ENCODE measurements at regions of chr2 and their contacts with region 1.

Region 1: GRCh38 chr2:20291106-20291564 is 59.5 kb downstream of the PUM2 start:
- DNase-seq: peak; percentile 75
- ATAC-seq: peak; percentile 91
- H3K4me3 ChIP-seq: no peak overlapping the region
- H3K27ac ChIP-seq: peak overlapping the region; percentile 48; the same call in 1 of the 2 replicates
- H3K4me1 ChIP-seq: peaks cover 26 to 43% of the 10 kb centered on the region in 2 experiments
- H3K27me3 ChIP-seq: no peaks in the 10 kb centered on the region
- CTCF ChIP-seq: peak; percentile 75 to 98 (median 90)
- POLR2A ChIP-seq: no peak
- RAD21 ChIP-seq: peak; percentile 74

Region 2: GRCh38 chr2:19982268-19982667 is 308.9 kb before region 1 on chr2:
- CTCF ChIA-PET with region 1: no interaction called
- POLR2A ChIA-PET with region 1: no interaction called
- RAD21 ChIA-PET with region 1: no interaction called
- intact Hi-C with region 1: no loop called
- DNase-seq: no peak
- ATAC-seq: no peak
- H3K4me3 ChIP-seq: no peak overlapping the region
- H3K27ac ChIP-seq: no peak overlapping the region
- H3K4me1 ChIP-seq: 0 out of 4 replicates have a peak, but pooled peaks cover 0 to 2% of the 10 kb centered on the region in 2 experiments
- H3K27me3 ChIP-seq: no peaks in the 10 kb centered on the region
- CTCF ChIP-seq: no peak
- POLR2A ChIP-seq: no peak
- RAD21 ChIP-seq: no peak

Region 3: DNA sequence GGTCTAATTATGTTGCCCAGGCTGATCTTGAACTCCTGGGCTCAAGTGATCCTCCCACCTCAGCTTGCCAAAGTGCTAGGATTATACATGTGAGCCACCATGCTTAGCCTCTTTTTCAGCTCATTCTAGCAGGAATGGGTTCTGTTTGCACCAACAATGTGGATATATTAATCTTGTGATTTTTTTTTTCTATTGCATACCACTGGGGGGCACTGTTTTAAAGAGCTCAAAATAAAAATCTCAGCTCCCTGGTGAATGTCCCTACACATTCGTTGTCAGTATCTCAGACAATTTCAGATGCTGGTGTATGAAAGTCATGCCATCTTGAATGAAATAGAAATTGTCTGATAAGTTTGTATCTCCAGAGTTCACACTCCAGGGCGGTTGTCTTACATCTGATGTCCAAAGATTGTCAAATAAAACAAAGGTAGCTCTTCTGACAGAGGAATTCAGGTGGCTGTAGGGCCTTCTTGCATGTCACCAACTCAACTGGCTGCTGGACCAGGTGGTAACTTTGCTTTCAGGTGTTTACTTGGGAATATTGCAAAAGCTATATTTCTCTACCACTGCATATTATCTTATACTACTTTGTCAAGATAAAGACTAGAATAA is 275.6 kb before region 1 on chr2:
- CTCF ChIA-PET with region 1: interaction called, 10 read pairs
- POLR2A ChIA-PET with region 1: no interaction called
- RAD21 ChIA-PET with region 1: no interaction called
- intact Hi-C with region 1: no loop called
- DNase-seq: peak; percentile 26
- ATAC-seq: peak; percentile 74
- H3K4me3 ChIP-seq: no peak overlapping the region
- H3K27ac ChIP-seq: no peak overlapping the region
- H3K4me1 ChIP-seq: no peaks in the 10 kb centered on the region
- H3K27me3 ChIP-seq: no peaks in the 10 kb centered on the region
- CTCF ChIP-seq: peak; percentile 52 to 83 (median 70)
- POLR2A ChIP-seq: no peak
- RAD21 ChIP-seq: peak; percentile 77

Region 4: DNA sequence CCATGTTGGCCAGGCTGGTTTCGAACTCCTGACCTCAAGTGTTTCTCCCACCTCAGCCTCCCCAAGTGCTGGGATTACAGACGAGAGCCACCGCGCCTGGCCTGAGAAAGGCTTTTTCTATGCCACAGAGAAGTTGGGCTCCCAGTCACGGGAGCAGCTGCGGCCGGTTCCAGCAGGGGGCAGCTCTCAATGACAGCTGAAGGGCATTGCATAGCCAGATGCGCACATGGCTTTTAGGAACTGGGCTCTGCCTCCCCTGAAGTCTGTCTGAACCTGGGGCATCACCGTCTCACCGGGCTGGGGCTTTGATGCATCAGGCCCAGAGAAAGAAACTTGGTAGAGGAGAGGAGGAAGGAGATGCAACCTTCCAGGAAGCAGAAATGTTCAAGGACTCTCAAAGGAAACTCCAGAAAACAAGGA is 155.5 kb before region 1 on chr2:
- CTCF ChIA-PET with region 1: interaction called, 10 read pairs
- POLR2A ChIA-PET with region 1: no interaction called
- RAD21 ChIA-PET with region 1: interaction called in 1 of 2 experiments, 3 read pairs
- intact Hi-C with region 1: loop called (anchors 1 kb)
- DNase-seq: peak; percentile 43
- ATAC-seq: peak; percentile 93
- H3K4me3 ChIP-seq: no peak overlapping the region
- H3K27ac ChIP-seq: no peak overlapping the region
- H3K4me1 ChIP-seq: peaks cover 0 to 14% of the 10 kb centered on the region in 2 experiments; a peak in 2 of 4 replicates
- H3K27me3 ChIP-seq: no peaks in the 10 kb centered on the region
- CTCF ChIP-seq: peak; percentile 78 to 85 (median 82)
- POLR2A ChIP-seq: no peak
- RAD21 ChIP-seq: peak; percentile 83

Region 5: DNA sequence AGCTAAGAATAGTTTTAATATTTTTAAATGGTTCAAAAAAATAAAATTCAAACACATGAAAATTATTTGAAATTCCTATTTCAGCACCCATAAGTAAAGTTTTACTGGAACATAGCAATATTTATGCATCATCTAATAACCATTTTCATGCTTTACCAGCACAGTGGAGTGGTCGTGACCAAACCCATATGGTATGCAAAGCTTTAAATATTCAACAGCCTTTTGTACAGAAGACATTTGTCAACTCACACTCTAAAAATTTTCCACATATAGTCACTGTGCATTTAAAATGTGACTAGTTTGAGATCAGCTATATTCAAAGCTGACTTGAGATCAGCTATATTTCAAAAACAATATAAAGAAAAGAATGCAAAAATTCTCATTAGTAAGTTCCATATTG is 13.3 kb after region 1 on chr2:
- CTCF ChIA-PET with region 1: interaction called, 16 read pairs
- POLR2A ChIA-PET with region 1: interaction called, 4 read pairs
- RAD21 ChIA-PET with region 1: no interaction called
- intact Hi-C with region 1: no loop called
- DNase-seq: no peak
- ATAC-seq: no peak
- H3K4me3 ChIP-seq: no peak overlapping the region
- H3K27ac ChIP-seq: no peak overlapping the region
- H3K4me1 ChIP-seq: peaks cover 0 to 4% of the 10 kb centered on the region in 2 experiments; a peak in 1 of 4 replicates
- H3K27me3 ChIP-seq: no peaks in the 10 kb centered on the region
- CTCF ChIP-seq: no peak
- POLR2A ChIP-seq: no peak
- RAD21 ChIP-seq: no peak

Region 6: DNA sequence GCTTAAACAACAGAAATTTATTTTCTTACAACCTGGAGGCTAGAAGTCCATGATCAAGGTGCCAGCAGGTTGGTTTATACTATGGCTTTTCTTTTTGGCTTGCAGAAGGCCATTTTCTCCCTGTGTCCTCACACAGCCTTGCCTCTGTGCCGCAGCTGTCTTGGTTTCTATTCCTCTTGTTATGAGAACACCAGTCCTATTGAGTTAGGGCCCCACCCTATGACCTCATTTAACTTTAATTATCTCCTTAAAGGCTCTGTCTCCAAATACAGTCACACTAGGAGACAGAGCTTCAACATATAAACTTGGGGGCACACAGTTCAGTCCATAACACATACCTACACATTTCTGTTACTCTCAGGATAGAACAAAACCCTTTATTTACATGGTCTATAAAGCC is 138.4 kb after region 1 on chr2:
- CTCF ChIA-PET with region 1: no interaction called
- POLR2A ChIA-PET with region 1: no interaction called
- RAD21 ChIA-PET with region 1: no interaction called
- intact Hi-C with region 1: no loop called
- DNase-seq: no peak
- ATAC-seq: no peak
- H3K4me3 ChIP-seq: no peak overlapping the region
- H3K27ac ChIP-seq: no peak overlapping the region
- H3K4me1 ChIP-seq: peaks cover 0 to 11% of the 10 kb centered on the region in 2 experiments; a peak in 2 of 4 replicates
- H3K27me3 ChIP-seq: no peaks in the 10 kb centered on the region
- CTCF ChIP-seq: no peak
- POLR2A ChIP-seq: no peak
- RAD21 ChIP-seq: no peak